HCT116 (cell line): ENCODE measurements at regions of chr4 and their contacts with region 1.

Region 1: GRCh38 chr4:29278585-29278984 is 1441.6 kb upstream of the PCDH7 start:
- DNase-seq: no peak
- ATAC-seq: no peak
- H3K4me3 ChIP-seq: no peak overlapping the region
- H3K27ac ChIP-seq: no peak overlapping the region
- H3K4me1 ChIP-seq: peaks cover 0 to 8% of the 10 kb centered on the region in 2 experiments; a peak in 2 of 4 replicates
- H3K27me3 ChIP-seq: no peaks in the 10 kb centered on the region
- CTCF ChIP-seq: no peak
- POLR2A ChIP-seq: no peak
- RAD21 ChIP-seq: no peak

Region 2: GRCh38 chr4:29295280-29295679 is 16.7 kb after region 1 on chr4:
- CTCF ChIA-PET with region 1: no interaction called
- POLR2A ChIA-PET with region 1: no interaction called
- RAD21 ChIA-PET with region 1: interaction called in 1 of 2 experiments, 10 read pairs
- intact Hi-C with region 1: no loop called
- DNase-seq: no peak
- ATAC-seq: no peak
- H3K4me3 ChIP-seq: no peak overlapping the region
- H3K27ac ChIP-seq: no peak overlapping the region
- H3K4me1 ChIP-seq: no peaks in the 10 kb centered on the region
- H3K27me3 ChIP-seq: no peaks in the 10 kb centered on the region
- CTCF ChIP-seq: no peak
- POLR2A ChIP-seq: no peak
- RAD21 ChIP-seq: no peak

Region 3: GRCh38 chr4:29908276-29908675 is 629.7 kb after region 1 on chr4:
- CTCF ChIA-PET with region 1: no interaction called
- POLR2A ChIA-PET with region 1: no interaction called
- RAD21 ChIA-PET with region 1: no interaction called
- intact Hi-C with region 1: no loop called
- DNase-seq: no peak
- ATAC-seq: no peak
- H3K4me3 ChIP-seq: no peak overlapping the region
- H3K27ac ChIP-seq: no peak overlapping the region
- H3K4me1 ChIP-seq: no peaks in the 10 kb centered on the region
- H3K27me3 ChIP-seq: no peaks in the 10 kb centered on the region
- CTCF ChIP-seq: no peak
- POLR2A ChIP-seq: no peak
- RAD21 ChIP-seq: no peak